ENCODE measurements at regions of chr13 and their contacts with region 1.

Region 1: DNA sequence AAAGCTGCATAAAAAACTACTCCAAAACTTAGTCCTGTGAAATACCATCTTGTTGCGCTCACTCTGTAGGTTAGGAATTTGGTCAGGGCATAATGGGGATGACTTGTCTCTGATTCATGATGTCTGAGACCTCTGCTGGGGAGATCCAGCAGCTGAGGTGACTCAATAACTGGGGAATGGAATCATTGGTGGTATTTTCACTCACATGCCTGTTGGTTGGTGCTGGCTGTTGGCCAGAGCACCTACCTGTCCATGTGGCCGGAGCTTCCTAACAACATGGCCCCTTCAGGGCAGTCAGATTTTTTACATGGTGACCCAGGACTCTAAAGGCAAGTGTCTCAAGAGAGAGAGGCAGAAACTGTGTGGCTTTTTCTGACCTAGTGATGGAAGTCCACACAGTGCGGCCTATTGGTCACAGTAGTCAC is 7.4 kb upstream of the ESD start:
- DNase-seq: no peak
- H3K4me3 ChIP-seq: no peak overlapping the region
- H3K27ac ChIP-seq: no peak overlapping the region
- H3K4me1 ChIP-seq: no peaks in the 10 kb centered on the region
- H3K27me3 ChIP-seq: no peaks in the 10 kb centered on the region
- CTCF ChIP-seq: no peak
- EP300 ChIP-seq: no peak
- POLR2A ChIP-seq: no peak

Region 2: DNA sequence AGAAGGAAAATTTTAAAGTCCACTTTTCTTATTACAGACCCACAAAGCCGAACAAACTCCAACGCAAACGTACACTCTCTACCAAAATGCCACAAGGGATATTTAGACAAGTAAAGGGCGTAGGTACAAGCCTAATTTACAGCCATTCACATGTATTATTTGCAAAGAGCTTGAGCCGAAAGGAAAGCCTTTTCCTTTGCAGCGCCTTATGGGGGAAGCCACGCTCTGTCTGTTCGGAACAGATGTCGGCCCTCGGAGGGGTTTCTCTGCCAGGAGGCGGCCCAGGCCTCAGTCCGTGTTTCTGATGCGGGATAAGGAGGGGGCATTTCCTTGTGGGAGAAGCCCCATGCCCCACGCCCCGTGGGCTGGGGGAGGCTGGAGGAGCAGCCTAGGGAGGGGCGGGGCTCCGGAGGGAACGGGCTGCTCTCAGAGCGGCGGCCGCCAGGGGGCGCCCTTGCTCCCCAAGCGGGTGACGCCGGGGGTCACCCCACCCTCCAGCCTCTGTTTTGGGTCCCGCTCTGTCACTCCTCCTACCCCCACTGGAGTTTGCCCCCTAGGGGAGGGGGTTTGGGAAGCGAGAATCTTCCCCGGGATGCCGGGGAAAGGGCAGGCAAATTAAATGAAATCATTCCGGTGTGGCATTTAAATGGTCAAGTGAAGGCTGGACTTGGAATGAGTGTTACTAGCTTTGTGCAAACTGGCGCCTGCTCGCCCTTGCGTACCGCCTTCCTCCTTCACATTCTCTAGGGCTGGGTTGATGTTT is 89.6 kb after region 1 on chr13:
- intact Hi-C with region 1: loop called (anchors 5 kb)
- DNase-seq: no peak
- H3K4me3 ChIP-seq: peak overlapping the region; percentile 61 to 71 (median 65)
- H3K27ac ChIP-seq: peak overlapping the region; percentile 53 to 78 (median 64)
- H3K4me1 ChIP-seq: peaks cover 0 to 45% (median 30%) of the 10 kb centered on the region in 4 donors
- H3K27me3 ChIP-seq: no peaks in the 10 kb centered on the region
- CTCF ChIP-seq: peak; percentile 80 to 100 (median 98)
- EP300 ChIP-seq: no peak
- POLR2A ChIP-seq: no peak